T-cell (primary cell): ENCODE measurements at regions of chr13 and their contacts with region 1.

Region 1: GRCh38 chr13:32135655-32136054 is 104.1 kb downstream of the FRY start:
- DNase-seq: no peak
- ATAC-seq: no peak
- H3K4me3 ChIP-seq: no peak overlapping the region
- H3K4me3 Mint-ChIP-seq: no peak overlapping the region
- H3K27ac ChIP-seq: no peak overlapping the region
- H3K27ac Mint-ChIP-seq: no peak overlapping the region
- H3K4me1 ChIP-seq: no peaks in the 10 kb centered on the region
- H3K4me1 Mint-ChIP-seq: no peaks in the 10 kb centered on the region
- H3K27me3 ChIP-seq: no peaks in the 10 kb centered on the region
- H3K27me3 Mint-ChIP-seq: no peaks in the 10 kb centered on the region

Region 2: GRCh38 chr13:32234932-32235331 is 99.3 kb after region 1 on chr13:
- CTCF ChIA-PET with region 1: no interaction called
- POLR2A ChIA-PET with region 1: interaction called in 1 of 2 experiments, 13 read pairs
- DNase-seq: peak in 10 of 35 experiments; percentile 1 to 24 (median 6)
- ATAC-seq: no peak
- H3K4me3 ChIP-seq: no peak overlapping the region
- H3K4me3 Mint-ChIP-seq: no peak overlapping the region
- H3K27ac ChIP-seq: no peak overlapping the region
- H3K27ac Mint-ChIP-seq: no peak overlapping the region
- H3K4me1 ChIP-seq: peaks cover 0 to 4% of the 10 kb centered on the region in 2 experiments
- H3K4me1 Mint-ChIP-seq: peaks cover 10 to 13% (median 10%) of the 10 kb centered on the region in 3 donors
- H3K27me3 ChIP-seq: no peaks in the 10 kb centered on the region
- H3K27me3 Mint-ChIP-seq: peaks cover 0 to 2% of the 10 kb centered on the region in 2 donors

Region 3: DNA sequence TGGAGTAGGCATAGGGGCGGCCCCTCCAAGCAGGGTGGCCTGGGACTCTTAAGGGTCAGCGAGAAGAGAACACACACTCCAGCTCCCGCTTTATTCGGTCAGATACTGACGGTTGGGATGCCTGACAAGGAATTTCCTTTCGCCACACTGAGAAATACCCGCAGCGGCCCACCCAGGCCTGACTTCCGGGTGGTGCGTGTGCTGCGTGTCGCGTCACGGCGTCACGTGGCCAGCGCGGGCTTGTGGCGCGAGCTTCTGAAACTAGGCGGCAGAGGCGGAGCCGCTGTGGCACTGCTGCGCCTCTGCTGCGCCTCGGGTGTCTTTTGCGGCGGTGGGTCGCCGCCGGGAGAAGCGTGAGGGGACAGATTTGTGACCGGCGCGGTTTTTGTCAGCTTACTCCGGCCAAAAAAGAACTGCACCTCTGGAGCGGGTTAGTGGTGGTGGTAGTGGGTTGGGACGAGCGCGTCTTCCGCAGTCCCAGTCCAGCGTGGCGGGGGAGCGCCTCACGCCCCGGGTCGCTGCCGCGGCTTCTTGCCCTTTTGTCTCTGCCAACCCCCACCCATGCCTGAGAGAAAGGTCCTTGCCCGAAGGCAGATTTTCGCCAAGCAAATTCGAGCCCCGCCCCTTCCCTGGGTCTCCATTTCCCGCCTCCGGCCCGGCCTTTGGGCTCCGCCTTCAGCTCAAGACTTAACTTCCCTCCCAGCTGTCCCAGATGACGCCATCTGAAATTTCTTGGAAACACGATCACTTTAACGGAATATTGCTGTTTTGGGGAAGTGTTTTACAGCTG is 179.8 kb after region 1 on chr13 and contains the starts of genes BRCA2 and ZAR1L:
- CTCF ChIA-PET with region 1: no interaction called
- POLR2A ChIA-PET with region 1: no interaction called
- DNase-seq: peak; percentile 74 to 94 (median 86)
- ATAC-seq: peak; percentile 98
- H3K4me3 ChIP-seq: peak within 1 kb of the TSS; percentile 71 to 92
- H3K4me3 Mint-ChIP-seq: peak within 1 kb of the TSS; percentile 94 to 96 (median 95)
- H3K27ac ChIP-seq: peak within 1 kb of the TSS; percentile 98
- H3K27ac Mint-ChIP-seq: peak within 1 kb of the TSS; percentile 99
- H3K4me1 ChIP-seq: peaks cover 0 to 14% of the 10 kb centered on the region in 2 experiments
- H3K4me1 Mint-ChIP-seq: peaks cover 11 to 17% (median 15%) of the 10 kb centered on the region in 3 donors
- H3K27me3 ChIP-seq: no peaks in the 10 kb centered on the region
- H3K27me3 Mint-ChIP-seq: no peaks in the 10 kb centered on the region
- total RNA-seq, gene BRCA2: 2.2 to 4.7 (median 3.1) TPM
- total RNA-seq, gene ZAR1L: not detected